Activated CD8-positive, alpha-beta T cell treated with anti-CD3 and anti-CD28 coated beads for 36 hours (primary cell): ENCODE measurements at regions of chr5 and their contacts with region 1.

Region 1: GRCh38 chr5:80960531-80961375 is 590 bp downstream of the RASGRF2 start:
- DNase-seq: peak; percentile 68
- ATAC-seq: peak; percentile 47
- H3K4me3 Mint-ChIP-seq: peak overlapping the region; percentile 92
- H3K27ac Mint-ChIP-seq: peak overlapping the region; percentile 87
- H3K4me1 Mint-ChIP-seq: peaks cover 58% of the 10 kb centered on the region
- H3K27me3 Mint-ChIP-seq: no peaks in the 10 kb centered on the region
- CTCF ChIP-seq: no peak

Region 2: GRCh38 chr5:80576383-80576782 is 384.4 kb before region 1 on chr5:
- CTCF ChIA-PET with region 1: no interaction called
- POLR2A ChIA-PET with region 1: no interaction called
- intact Hi-C with region 1: no loop called
- DNase-seq: no peak
- ATAC-seq: no peak
- H3K4me3 Mint-ChIP-seq: no peak overlapping the region
- H3K27ac Mint-ChIP-seq: no peak overlapping the region
- H3K4me1 Mint-ChIP-seq: no peaks in the 10 kb centered on the region
- H3K27me3 Mint-ChIP-seq: peaks cover 40% of the 10 kb centered on the region
- CTCF ChIP-seq: no peak

Region 3: DNA sequence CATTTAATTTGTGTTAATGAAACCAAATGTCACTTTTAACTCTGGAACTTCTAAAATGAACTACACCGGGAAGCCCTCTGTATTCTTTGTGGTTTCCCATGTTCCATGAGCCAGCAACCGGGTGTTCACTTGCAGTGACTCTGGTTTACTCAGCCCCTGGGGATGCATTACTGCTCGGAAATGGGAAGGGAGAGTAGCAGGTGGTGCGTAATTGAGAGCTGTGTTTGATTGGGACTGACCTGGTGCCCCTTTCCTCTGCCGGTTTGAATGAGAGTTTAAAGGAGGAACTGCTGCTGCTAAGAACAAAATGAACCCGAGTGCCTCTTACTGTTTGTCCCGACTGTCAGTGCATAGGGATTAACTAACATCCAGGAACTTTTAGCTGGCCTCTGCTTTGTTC is 205.9 kb before region 1 on chr5:
- CTCF ChIA-PET with region 1: no interaction called
- POLR2A ChIA-PET with region 1: no interaction called
- intact Hi-C with region 1: loop called (anchors 10 kb)
- DNase-seq: peak; percentile 73
- ATAC-seq: peak; percentile 38
- H3K4me3 Mint-ChIP-seq: peak overlapping the region; percentile 44
- H3K27ac Mint-ChIP-seq: peak overlapping the region; percentile 89
- H3K4me1 Mint-ChIP-seq: peaks cover 62% of the 10 kb centered on the region
- H3K27me3 Mint-ChIP-seq: no peaks in the 10 kb centered on the region
- CTCF ChIP-seq: no peak

Region 4: GRCh38 chr5:80871541-80871961 is 89.2 kb before region 1 on chr5:
- CTCF ChIA-PET with region 1: no interaction called
- POLR2A ChIA-PET with region 1: no interaction called
- intact Hi-C with region 1: no loop called
- DNase-seq: peak; percentile 44
- ATAC-seq: peak; percentile 91
- H3K4me3 Mint-ChIP-seq: no peak overlapping the region
- H3K27ac Mint-ChIP-seq: peak overlapping the region; percentile 35
- H3K4me1 Mint-ChIP-seq: peaks cover 22% of the 10 kb centered on the region
- H3K27me3 Mint-ChIP-seq: no peaks in the 10 kb centered on the region
- CTCF ChIP-seq: no peak

Region 5: DNA sequence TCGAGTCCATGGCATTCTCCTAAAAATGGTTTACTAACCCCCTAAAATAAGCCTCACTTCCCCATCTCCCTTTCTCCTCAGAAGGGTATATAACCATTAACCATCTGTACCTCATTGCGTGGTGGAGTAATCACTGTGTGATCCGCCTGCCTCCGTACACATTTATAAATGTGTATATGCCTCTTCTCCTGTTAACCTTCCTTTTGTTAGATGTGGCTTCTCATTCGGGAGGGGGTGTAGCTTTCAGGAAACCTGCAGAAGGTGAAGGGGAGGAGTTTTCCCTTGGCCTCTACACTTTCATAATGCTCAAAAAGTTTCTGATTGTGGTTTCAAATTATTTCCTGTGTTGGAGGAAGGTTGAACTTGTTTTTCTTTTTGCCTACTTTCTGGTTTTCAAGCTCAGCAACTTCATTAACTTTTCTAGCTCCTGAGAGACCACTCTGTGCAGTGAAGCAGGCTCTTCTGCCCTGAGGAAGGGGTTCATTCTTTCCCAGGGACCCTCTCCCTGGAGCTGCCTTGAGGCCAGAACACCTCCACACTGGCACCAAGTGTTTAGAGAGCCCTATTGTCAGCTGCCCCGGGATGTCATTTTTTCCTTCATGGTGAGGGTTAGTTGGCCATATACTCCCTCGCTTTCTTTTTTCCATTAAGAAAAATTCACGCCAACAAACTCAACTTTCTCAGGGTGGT is 46.3 kb after region 1 on chr5:
- CTCF ChIA-PET with region 1: no interaction called
- POLR2A ChIA-PET with region 1: interaction called, 13 read pairs
- intact Hi-C with region 1: loop called (anchors 2 kb)
- DNase-seq: peak; percentile 74
- ATAC-seq: peak; percentile 83
- H3K4me3 Mint-ChIP-seq: peak overlapping the region; percentile 80
- H3K27ac Mint-ChIP-seq: peak overlapping the region; percentile 98
- H3K4me1 Mint-ChIP-seq: peaks cover 75% of the 10 kb centered on the region
- H3K27me3 Mint-ChIP-seq: no peaks in the 10 kb centered on the region
- CTCF ChIP-seq: no peak